ENCODE measurements at regions of chr22 and their contacts with region 1.

Region 1: GRCh38 chr22:22884010-22884887 is 3.4 kb upstream of the IGLL5 start:
- DNase-seq: no peak
- ATAC-seq: peak; percentile 52
- H3K4me3 Mint-ChIP-seq: peak overlapping the region; percentile 28
- H3K27ac Mint-ChIP-seq: peak overlapping the region; percentile 83
- H3K4me1 Mint-ChIP-seq: peaks cover 88% of the 10 kb centered on the region
- H3K27me3 Mint-ChIP-seq: peaks cover 5% of the 10 kb centered on the region
- CTCF ChIP-seq: peak; percentile 75

Region 2: GRCh38 chr22:22422629-22423112 is 461.6 kb before region 1 on chr22:
- CTCF ChIA-PET with region 1: interaction called, 9 read pairs
- POLR2A ChIA-PET with region 1: interaction called, 6 read pairs
- intact Hi-C with region 1: loop called (anchors 5 kb)
- DNase-seq: peak; percentile 79
- ATAC-seq: peak; percentile 99
- H3K4me3 Mint-ChIP-seq: peak overlapping the region; percentile 62
- H3K27ac Mint-ChIP-seq: peak overlapping the region; percentile 70
- H3K4me1 Mint-ChIP-seq: peaks cover 76% of the 10 kb centered on the region
- H3K27me3 Mint-ChIP-seq: no peaks in the 10 kb centered on the region
- CTCF ChIP-seq: peak; percentile 62

Region 3: GRCh38 chr22:22748297-22748743 is 135.9 kb before region 1 on chr22:
- CTCF ChIA-PET with region 1: interaction called, 42 read pairs
- POLR2A ChIA-PET with region 1: interaction called, 3 read pairs
- intact Hi-C with region 1: loop called (anchors 2 kb)
- DNase-seq: no peak
- ATAC-seq: peak; percentile 35
- H3K4me3 Mint-ChIP-seq: no peak overlapping the region
- H3K27ac Mint-ChIP-seq: peak overlapping the region; percentile 18
- H3K4me1 Mint-ChIP-seq: peaks cover 48% of the 10 kb centered on the region
- H3K27me3 Mint-ChIP-seq: no peaks in the 10 kb centered on the region
- CTCF ChIP-seq: peak; percentile 24

Region 4: GRCh38 chr22:22787786-22788459 is 96.3 kb before region 1 on chr22:
- CTCF ChIA-PET with region 1: interaction called, 36 read pairs
- POLR2A ChIA-PET with region 1: interaction called, 8 read pairs
- intact Hi-C with region 1: loop called (anchors 1 kb)
- DNase-seq: peak; percentile 52
- ATAC-seq: peak; percentile 83
- H3K4me3 Mint-ChIP-seq: no peak overlapping the region
- H3K27ac Mint-ChIP-seq: no peak overlapping the region
- H3K4me1 Mint-ChIP-seq: no peaks in the 10 kb centered on the region
- H3K27me3 Mint-ChIP-seq: peaks cover 4% of the 10 kb centered on the region
- CTCF ChIP-seq: no peak

Region 5: GRCh38 chr22:22855617-22856308 is 28.5 kb before region 1 on chr22:
- CTCF ChIA-PET with region 1: interaction called, 90 read pairs
- POLR2A ChIA-PET with region 1: interaction called, 68 read pairs
- intact Hi-C with region 1: loop called (anchors 1 kb)
- DNase-seq: peak; percentile 53
- ATAC-seq: peak; percentile 79
- H3K4me3 Mint-ChIP-seq: no peak overlapping the region
- H3K27ac Mint-ChIP-seq: peak overlapping the region; percentile 4
- H3K4me1 Mint-ChIP-seq: peaks cover 35% of the 10 kb centered on the region
- H3K27me3 Mint-ChIP-seq: peaks cover 10% of the 10 kb centered on the region
- CTCF ChIP-seq: no peak

Region 6: DNA sequence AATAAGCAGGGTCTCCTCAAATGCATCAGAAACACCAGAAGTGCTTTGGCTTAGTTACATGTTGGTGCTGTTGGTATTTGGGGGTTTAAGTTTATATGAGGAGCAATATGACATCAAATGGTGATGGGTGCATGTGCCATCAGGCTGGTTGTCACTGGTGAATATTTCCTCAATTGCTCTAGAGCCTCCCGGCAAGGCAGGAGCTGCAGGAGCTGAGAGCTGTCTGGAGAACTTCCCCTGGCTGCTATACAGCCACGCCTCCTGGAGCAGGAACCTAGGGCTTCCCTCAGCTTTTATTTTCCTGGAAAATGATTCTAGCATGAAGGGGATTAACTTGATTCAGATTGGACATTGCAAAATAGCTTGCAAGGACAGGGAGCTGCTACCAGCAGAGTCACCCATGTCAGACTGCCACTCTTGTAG is 19.1 kb after region 1 on chr22:
- CTCF ChIA-PET with region 1: interaction called, 3 read pairs
- POLR2A ChIA-PET with region 1: interaction called, 21 read pairs
- intact Hi-C with region 1: no loop called
- DNase-seq: no peak
- ATAC-seq: no peak
- H3K4me3 Mint-ChIP-seq: peak overlapping the region; percentile 87
- H3K27ac Mint-ChIP-seq: peak overlapping the region; percentile 76
- H3K4me1 Mint-ChIP-seq: peaks cover 66% of the 10 kb centered on the region
- H3K27me3 Mint-ChIP-seq: no peaks in the 10 kb centered on the region
- CTCF ChIP-seq: no peak

Region 7: GRCh38 chr22:22942511-22943329 is 58.5 kb after region 1 on chr22:
- CTCF ChIA-PET with region 1: interaction called, 365 read pairs
- POLR2A ChIA-PET with region 1: interaction called, 701 read pairs
- intact Hi-C with region 1: no loop called
- DNase-seq: peak; percentile 62
- ATAC-seq: peak; percentile 75
- H3K4me3 Mint-ChIP-seq: peak overlapping the region; percentile 29
- H3K27ac Mint-ChIP-seq: peak overlapping the region; percentile 85
- H3K4me1 Mint-ChIP-seq: peaks cover 90% of the 10 kb centered on the region
- H3K27me3 Mint-ChIP-seq: no peaks in the 10 kb centered on the region
- CTCF ChIP-seq: peak; percentile 27

Measured in activated B cell treated with CpG ODN at 0.5 μM for 24 hours (primary cell).